Activated CD4-positive, alpha-beta T cell treated with anti-CD3 and anti-CD28 coated beads, Interleukin-2, amount 10 ng/mL, durations not matched to agents 24 days and 14 days (primary cell): ENCODE measurements at regions of chr1 and their contacts with region 1.

Region 1: GRCh38 chr1:53485478-53486394 is 26.5 kb downstream of the DMRTB1 start:
- DNase-seq: peak; percentile 89
- H3K4me3 Mint-ChIP-seq: no peak overlapping the region
- H3K27ac Mint-ChIP-seq: no peak overlapping the region
- H3K4me1 Mint-ChIP-seq: peaks cover 3% of the 10 kb centered on the region
- H3K27me3 Mint-ChIP-seq: peaks cover 6% of the 10 kb centered on the region

Region 2: DNA sequence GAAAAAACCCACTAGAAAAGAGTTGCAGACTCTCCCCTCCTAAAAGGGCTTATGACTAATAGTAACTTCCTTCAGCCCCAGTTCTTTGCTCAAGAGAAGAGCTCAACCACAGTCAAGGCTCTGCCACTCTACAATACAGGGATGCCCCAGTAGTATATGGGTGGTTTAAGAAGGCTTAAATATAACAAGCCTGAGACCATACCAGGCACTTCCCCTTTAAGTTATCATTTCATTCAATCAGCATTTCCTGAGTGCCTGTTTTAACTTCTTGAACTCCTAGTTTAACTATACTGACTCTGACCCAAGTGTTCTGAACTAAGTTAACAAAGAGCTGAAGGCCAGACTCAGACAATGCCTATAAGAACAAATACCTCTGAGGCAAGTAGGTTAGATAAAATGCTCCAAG is 1061.5 kb before region 1 on chr1:
- intact Hi-C with region 1: no loop called
- DNase-seq: peak; percentile 78
- H3K4me3 Mint-ChIP-seq: peak overlapping the region; percentile 67
- H3K27ac Mint-ChIP-seq: peak overlapping the region; percentile 81
- H3K4me1 Mint-ChIP-seq: peaks cover 39% of the 10 kb centered on the region
- H3K27me3 Mint-ChIP-seq: no peaks in the 10 kb centered on the region

Region 3: DNA sequence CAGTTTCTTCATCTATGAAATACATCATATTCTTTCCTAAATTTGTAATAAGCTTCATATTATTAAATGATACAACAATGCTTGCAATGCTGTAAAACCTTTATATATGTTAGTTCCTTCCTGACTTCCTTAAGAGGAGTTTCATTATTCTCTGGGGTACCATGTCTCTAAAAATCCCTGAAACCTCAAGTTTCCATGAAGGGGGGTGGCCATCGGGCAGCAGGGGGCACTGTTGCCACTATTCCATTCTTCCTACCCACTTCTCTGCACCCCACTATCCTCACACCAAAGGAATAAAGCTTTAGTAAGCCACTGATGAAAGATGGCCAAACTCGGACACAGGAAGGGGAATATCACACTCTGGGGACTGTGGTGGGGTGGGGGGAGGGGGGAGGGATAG is 35.5 kb before region 1 on chr1:
- intact Hi-C with region 1: no loop called
- DNase-seq: no peak
- H3K4me3 Mint-ChIP-seq: no peak overlapping the region
- H3K27ac Mint-ChIP-seq: no peak overlapping the region
- H3K4me1 Mint-ChIP-seq: peaks cover 2% of the 10 kb centered on the region
- H3K27me3 Mint-ChIP-seq: peaks cover 43% of the 10 kb centered on the region

Region 4: GRCh38 chr1:53592521-53592982 is 106.8 kb after region 1 on chr1:
- intact Hi-C with region 1: loop called (anchors 10 kb)
- DNase-seq: no peak
- H3K4me3 Mint-ChIP-seq: no peak overlapping the region
- H3K27ac Mint-ChIP-seq: no peak overlapping the region
- H3K4me1 Mint-ChIP-seq: no peaks in the 10 kb centered on the region
- H3K27me3 Mint-ChIP-seq: peaks cover 3% of the 10 kb centered on the region

Region 5: GRCh38 chr1:53655931-53656746 is 170.4 kb after region 1 on chr1:
- intact Hi-C with region 1: no loop called
- DNase-seq: no peak
- H3K4me3 Mint-ChIP-seq: no peak overlapping the region
- H3K27ac Mint-ChIP-seq: no peak overlapping the region
- H3K4me1 Mint-ChIP-seq: no peaks in the 10 kb centered on the region
- H3K27me3 Mint-ChIP-seq: peaks cover 17% of the 10 kb centered on the region

Region 6: DNA sequence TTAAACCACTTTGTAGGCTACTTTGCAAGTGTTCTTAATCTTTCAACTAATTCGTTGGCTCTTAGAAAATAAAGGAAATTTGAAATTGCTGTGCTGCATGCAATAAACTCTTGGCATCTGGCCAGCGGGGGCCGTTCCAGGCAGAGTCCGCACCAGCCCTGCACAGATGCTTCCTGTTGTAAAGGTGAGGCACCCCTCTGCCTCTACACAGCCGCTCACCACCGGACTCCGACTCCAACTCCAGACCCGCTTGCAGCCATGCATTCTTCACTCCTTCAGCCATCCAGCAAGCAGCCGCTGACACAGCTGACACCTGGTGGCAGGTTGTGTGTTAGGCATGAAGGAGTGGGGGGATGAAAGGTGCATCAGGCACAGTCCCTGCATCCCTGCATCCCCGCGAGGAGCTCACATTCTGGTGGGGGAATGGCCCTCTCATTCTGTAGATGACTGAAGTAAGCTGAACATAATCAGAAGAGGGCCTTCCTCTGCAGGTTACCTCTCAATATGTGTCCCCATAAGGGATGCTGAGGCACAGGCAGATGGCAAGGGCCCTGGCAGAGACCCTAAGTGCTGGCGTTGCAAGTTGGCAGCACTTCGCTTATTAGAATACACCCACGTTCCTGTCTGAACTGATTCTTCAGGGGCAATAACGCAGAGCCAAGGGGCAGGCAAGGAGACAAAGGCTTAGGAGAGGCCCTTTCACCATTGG is 196.4 kb after region 1 on chr1:
- intact Hi-C with region 1: loop called (anchors 1 kb)
- DNase-seq: peak; percentile 75
- H3K4me3 Mint-ChIP-seq: no peak overlapping the region
- H3K27ac Mint-ChIP-seq: no peak overlapping the region
- H3K4me1 Mint-ChIP-seq: peaks cover 3% of the 10 kb centered on the region
- H3K27me3 Mint-ChIP-seq: peaks cover 29% of the 10 kb centered on the region

Region 7: DNA sequence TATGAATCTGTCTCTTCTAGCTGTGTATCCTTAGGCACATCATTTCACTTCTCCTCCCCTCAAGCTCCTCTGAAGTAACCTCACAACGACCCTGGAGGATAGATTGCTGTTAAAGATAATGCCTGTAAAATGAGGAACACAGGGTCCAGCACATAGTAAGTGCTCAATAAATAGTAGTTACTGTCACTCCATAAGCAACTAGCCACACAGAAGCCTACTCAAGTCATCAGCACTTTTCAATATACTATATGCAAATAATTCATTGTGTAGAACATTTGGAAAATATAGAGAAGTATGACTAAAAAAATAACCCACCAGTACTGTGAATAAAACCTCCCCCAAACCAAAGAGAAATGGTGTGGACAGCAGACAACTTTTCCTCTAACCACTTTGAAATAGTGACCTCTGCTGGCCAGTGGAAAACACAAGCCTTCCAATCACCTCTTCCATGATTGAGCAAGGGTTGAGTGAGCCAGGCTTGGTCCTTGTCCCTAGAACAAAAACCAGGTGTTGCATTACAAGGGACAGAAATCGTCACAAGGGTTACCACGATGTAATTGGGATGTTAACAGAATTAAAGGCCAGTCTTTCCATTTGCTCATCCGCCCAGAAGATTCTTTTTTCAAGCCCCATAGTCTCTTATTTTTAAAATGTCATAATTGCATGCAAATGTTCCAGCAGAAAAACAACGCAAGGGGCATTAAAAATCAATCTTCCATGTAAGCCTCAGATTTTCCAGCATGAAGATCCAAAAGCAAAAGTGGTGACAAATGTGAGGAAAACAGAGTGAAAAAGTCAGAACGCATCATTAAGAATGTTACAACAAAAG is 269.0 kb after region 1 on chr1:
- intact Hi-C with region 1: loop called (anchors 1 kb)
- DNase-seq: peak; percentile 75
- H3K4me3 Mint-ChIP-seq: no peak overlapping the region
- H3K27ac Mint-ChIP-seq: no peak overlapping the region
- H3K4me1 Mint-ChIP-seq: peaks cover 3% of the 10 kb centered on the region
- H3K27me3 Mint-ChIP-seq: no peaks in the 10 kb centered on the region